Activated CD4-positive, alpha-beta T cell treated with anti-CD3 and anti-CD28 coated beads for 36 hours (primary cell): ENCODE measurements at regions of chr22 and their contacts with region 1.

Region 1: DNA sequence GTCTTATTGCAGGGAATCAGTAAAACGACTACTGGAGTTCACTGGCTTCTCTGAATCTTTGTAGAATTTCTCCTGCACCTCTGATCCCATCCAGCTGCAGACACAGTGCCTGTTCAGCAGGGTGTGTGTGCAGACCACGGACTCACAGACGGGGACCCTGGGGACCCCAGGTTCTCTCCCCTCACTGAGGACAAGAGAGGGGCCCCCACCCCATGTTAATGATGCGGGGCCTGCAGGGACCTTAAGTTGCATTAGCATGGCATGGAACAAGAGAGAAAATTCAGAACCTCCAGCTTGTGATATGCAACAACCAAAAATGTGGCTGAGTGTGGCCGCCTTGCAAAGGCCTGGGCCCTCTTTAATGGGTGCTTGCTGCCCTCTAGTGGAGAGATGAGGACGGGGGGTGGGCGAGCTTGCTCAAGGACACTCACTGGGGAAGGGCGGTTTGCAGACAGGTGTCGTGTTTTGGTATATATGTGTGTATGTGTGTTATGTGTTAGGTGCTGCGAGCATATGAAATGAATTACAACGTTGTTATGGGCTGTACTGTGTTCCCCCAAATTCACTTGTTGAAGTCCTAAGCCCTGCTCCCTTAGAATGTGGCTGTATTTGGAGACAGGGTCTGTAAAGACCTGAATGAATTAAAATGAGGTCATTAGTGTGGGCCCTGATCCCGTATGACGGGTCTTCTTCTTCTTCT is 84.4 kb upstream of the SEPTIN5 start:
- DNase-seq: peak; percentile 93
- ATAC-seq: peak; percentile 96
- H3K4me3 Mint-ChIP-seq: no peak overlapping the region
- H3K27ac Mint-ChIP-seq: no peak overlapping the region
- H3K4me1 Mint-ChIP-seq: peaks cover 5% of the 10 kb centered on the region
- H3K27me3 Mint-ChIP-seq: no peaks in the 10 kb centered on the region

Region 2: DNA sequence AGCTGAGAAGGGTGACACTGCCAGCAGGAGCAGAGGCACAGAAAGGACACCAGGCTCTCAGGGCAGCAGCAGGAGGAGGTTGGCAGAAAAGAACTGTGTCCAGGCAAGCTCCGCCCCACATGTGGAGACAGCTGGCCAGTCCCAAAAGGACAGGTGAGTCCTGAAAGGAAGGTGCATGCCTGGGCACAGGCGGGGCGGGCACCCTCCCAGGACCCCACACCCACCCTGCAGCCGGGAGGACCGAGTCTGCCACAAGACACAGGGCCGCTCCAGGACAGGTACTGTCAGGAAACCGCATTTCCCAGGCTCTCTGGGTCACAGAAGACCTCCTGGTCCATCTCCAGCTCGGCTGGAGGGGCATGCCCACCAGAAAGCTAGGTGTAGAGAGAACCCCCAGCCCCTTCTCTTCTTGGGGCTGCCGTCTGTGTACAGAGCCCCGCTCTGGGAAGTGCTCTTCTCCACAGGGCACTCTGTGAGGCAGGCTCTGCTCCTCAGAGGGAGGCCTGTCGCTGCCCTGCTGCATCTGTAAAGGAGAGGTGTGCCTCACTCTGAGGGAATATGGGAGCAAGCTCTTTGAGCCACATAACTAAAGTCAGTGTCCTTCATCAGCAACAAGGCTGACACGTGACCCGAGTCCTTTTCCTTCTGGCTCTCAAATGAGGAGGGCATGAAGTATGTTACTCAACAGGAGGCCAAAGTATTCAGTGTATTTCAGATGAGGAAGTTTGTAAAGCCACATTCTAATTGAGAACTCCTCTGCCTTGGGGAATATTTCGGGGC is 388.9 kb before region 1 on chr22:
- CTCF ChIA-PET with region 1: no interaction called
- POLR2A ChIA-PET with region 1: no interaction called
- intact Hi-C with region 1: loop called in 1 of 2 experiments (anchors 5 kb)
- DNase-seq: no peak
- ATAC-seq: no peak
- H3K4me3 Mint-ChIP-seq: no peak overlapping the region
- H3K27ac Mint-ChIP-seq: no peak overlapping the region
- H3K4me1 Mint-ChIP-seq: no peaks in the 10 kb centered on the region
- H3K27me3 Mint-ChIP-seq: no peaks in the 10 kb centered on the region

Region 3: DNA sequence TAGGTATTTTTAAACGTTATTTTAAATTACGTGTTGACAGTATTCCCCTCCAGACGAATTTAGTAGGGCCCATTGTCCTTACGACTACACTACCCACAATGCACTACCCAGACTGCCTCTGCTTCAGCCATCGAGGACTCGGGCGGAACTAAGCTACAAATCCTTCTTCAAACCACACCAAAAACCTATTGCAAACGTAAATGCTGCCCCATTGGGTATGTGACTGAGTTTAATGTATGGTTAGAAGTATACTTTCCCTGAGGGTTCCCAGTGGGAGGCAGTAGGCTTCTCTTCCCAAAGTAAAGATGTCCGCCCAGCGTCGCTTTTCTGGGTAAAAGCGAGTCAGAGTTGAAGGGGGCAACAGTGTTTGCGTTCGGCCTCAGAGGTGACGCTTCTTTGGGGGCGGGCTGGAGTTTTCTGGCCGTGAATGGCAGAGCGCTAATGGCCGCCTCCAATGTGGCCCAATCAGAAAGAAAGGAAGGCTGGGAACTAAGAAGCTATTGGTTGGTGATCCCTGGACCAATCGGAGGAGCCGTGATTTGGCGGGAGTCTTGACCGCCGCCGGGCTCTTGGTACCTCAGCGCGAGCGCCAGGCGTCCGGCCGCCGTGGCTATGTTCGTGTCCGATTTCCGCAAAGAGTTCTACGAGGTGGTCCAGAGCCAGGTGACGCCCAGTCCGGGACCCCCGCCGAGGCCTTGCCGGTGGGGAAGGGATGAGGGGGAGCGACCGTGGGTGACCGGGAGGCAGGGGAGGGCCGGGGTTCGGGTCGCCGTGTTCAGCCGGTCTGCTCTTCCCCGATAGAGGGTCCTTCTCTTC is 150.3 kb before region 1 on chr22 and contains the start of gene CDC45:
- CTCF ChIA-PET with region 1: interaction called, 18 read pairs
- POLR2A ChIA-PET with region 1: interaction called, 4 read pairs
- intact Hi-C with region 1: loop called (anchors 1 kb)
- DNase-seq: peak; percentile 97
- ATAC-seq: peak; percentile 91
- H3K4me3 Mint-ChIP-seq: peak within 1 kb of the TSS; percentile 99
- H3K27ac Mint-ChIP-seq: peak within 1 kb of the TSS; percentile 99
- H3K4me1 Mint-ChIP-seq: peaks cover 45% of the 10 kb centered on the region
- H3K27me3 Mint-ChIP-seq: no peaks in the 10 kb centered on the region
- total RNA-seq, gene CDC45: 103 to 111 TPM

Region 4: GRCh38 chr22:19523240-19524169 is 106.4 kb before region 1 on chr22:
- CTCF ChIA-PET with region 1: interaction called, 9 read pairs
- POLR2A ChIA-PET with region 1: interaction called, 3 read pairs
- intact Hi-C with region 1: loop called (anchors 1 to 5 kb)
- DNase-seq: peak; percentile 46
- ATAC-seq: peak; percentile 60
- H3K4me3 Mint-ChIP-seq: peak overlapping the region; percentile 19
- H3K27ac Mint-ChIP-seq: no peak overlapping the region
- H3K4me1 Mint-ChIP-seq: peaks cover 5% of the 10 kb centered on the region
- H3K27me3 Mint-ChIP-seq: peaks cover 26% of the 10 kb centered on the region

Region 5: GRCh38 chr22:19619144-19620009 is 10.5 kb before region 1 on chr22:
- CTCF ChIA-PET with region 1: interaction called, 10 read pairs
- POLR2A ChIA-PET with region 1: no interaction called
- intact Hi-C with region 1: no loop called
- DNase-seq: no peak
- ATAC-seq: no peak
- H3K4me3 Mint-ChIP-seq: no peak overlapping the region
- H3K27ac Mint-ChIP-seq: no peak overlapping the region
- H3K4me1 Mint-ChIP-seq: peaks cover 11% of the 10 kb centered on the region
- H3K27me3 Mint-ChIP-seq: no peaks in the 10 kb centered on the region